ENCODE measurements at regions of chr3 and their contacts with region 1.

Region 1: DNA sequence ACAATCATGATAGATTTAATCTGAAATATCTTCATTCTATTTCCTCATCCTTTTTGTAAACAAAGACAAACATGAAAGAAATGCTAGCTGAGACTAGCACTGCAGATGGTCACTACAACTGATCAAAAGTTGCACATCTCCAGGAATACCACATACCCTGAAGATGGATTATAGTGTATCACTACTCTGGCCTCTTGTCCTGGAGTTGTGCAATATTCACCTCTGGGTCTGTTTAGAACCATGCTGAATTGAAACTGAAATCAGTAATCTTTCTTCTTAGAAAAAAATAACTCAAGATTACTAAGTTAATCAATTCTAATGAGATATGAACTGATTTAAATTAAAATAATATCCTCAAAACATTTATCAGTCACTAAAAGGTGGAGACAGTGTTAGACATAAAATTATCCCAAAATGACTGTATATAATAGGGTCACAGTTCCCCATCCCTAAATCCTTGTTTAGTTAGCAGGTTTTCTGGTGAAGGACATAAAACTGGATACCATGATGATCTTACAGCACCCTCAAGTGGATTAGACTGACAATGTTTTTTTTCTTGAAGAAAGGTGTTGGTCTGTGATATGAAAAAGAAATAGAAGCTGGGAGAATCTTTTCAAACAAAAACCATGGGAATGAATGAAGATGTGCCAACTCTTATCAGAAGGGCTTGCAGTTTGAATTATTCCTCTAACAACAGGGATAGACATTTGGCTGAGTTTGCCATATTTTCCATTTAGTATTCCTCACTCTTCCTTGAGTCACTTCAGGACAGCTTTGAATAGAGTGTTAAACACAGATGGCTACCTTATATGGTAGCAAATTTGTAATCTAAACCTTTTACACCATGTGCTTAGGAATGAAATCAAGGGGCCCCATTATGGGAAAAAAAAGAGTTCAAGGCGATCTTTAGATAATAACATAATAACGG is 7.1 kb upstream of the TTC14 start:
- DNase-seq: peak in 1 of 14 experiments; percentile 5
- ATAC-seq: no peak
- H3K4me3 ChIP-seq: no peak overlapping the region
- H3K4me3 Mint-ChIP-seq: no peak overlapping the region
- H3K27ac ChIP-seq: no peak overlapping the region
- H3K27ac Mint-ChIP-seq: no peak overlapping the region
- H3K4me1 ChIP-seq: no peaks in the 10 kb centered on the region
- H3K4me1 Mint-ChIP-seq: no peaks in the 10 kb centered on the region
- H3K27me3 ChIP-seq: peaks cover 8 to 27% of the 10 kb centered on the region in 2 experiments
- H3K27me3 Mint-ChIP-seq: peaks cover 60% of the 10 kb centered on the region
- CTCF ChIP-seq: no peak

Region 2: DNA sequence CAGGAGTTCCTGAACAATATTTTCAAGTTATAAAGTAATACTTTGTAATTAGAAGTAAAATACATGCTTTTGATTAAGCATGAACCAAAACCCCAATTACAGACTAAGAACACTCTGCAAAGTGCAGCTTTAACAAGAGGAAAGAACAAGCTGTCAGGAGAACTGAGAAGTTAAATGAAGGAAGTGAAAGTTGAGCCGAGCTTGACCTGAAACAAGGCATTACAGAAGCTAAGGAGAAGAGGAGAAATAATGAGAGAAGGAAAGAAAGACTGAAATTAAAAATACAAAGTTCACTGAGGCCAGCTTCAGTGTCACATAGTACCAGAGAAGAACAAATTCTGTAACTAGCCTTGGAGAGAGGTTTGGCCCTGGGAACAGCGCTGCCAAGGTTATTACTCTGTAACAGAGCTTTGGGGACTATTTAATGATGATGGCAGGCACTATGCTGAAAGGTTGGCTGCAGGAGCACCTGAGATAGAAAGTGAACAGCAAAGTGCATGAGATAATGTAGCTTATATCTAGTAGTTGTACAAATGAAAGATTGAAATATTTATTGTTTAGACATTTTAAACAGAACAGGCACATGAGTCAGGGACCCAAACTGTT is 316.2 kb before region 1 on chr3:
- CTCF ChIA-PET with region 1: no interaction called
- POLR2A ChIA-PET with region 1: no interaction called
- intact Hi-C with region 1: no loop called
- DNase-seq: no peak
- ATAC-seq: no peak
- H3K4me3 ChIP-seq: no peak overlapping the region
- H3K4me3 Mint-ChIP-seq: no peak overlapping the region
- H3K27ac ChIP-seq: no peak overlapping the region
- H3K27ac Mint-ChIP-seq: no peak overlapping the region
- H3K4me1 ChIP-seq: no peaks in the 10 kb centered on the region
- H3K4me1 Mint-ChIP-seq: no peaks in the 10 kb centered on the region
- H3K27me3 ChIP-seq: no peaks in the 10 kb centered on the region
- H3K27me3 Mint-ChIP-seq: no peaks in the 10 kb centered on the region
- CTCF ChIP-seq: no peak

Region 3: DNA sequence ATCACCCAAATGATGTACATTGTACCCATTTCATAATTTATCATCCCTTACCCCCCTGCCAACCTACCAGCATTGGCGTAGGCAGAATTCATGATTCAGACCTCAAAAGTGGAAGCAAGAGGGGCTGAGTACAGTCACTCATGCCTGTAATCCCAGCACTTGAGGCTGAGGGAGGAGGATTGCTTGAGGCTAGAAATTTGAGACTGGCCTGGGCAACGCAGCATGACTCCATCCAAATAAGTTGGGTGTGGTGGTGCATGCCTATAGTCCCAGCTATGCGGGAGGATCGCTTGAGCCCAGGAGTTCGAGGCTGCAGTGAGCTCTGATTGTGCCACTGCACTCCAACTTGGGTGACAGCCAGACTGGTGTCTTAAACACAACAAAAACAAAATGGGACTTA is 17.5 kb after region 1 on chr3:
- CTCF ChIA-PET with region 1: no interaction called
- POLR2A ChIA-PET with region 1: no interaction called
- intact Hi-C with region 1: no loop called
- DNase-seq: no peak
- ATAC-seq: no peak
- H3K4me3 ChIP-seq: no peak overlapping the region
- H3K4me3 Mint-ChIP-seq: no peak overlapping the region
- H3K27ac ChIP-seq: no peak overlapping the region
- H3K27ac Mint-ChIP-seq: no peak overlapping the region
- H3K4me1 ChIP-seq: no peaks in the 10 kb centered on the region
- H3K4me1 Mint-ChIP-seq: peaks cover 10% of the 10 kb centered on the region
- H3K27me3 ChIP-seq: no peaks in the 10 kb centered on the region
- H3K27me3 Mint-ChIP-seq: no peaks in the 10 kb centered on the region
- CTCF ChIP-seq: no peak

Region 4: DNA sequence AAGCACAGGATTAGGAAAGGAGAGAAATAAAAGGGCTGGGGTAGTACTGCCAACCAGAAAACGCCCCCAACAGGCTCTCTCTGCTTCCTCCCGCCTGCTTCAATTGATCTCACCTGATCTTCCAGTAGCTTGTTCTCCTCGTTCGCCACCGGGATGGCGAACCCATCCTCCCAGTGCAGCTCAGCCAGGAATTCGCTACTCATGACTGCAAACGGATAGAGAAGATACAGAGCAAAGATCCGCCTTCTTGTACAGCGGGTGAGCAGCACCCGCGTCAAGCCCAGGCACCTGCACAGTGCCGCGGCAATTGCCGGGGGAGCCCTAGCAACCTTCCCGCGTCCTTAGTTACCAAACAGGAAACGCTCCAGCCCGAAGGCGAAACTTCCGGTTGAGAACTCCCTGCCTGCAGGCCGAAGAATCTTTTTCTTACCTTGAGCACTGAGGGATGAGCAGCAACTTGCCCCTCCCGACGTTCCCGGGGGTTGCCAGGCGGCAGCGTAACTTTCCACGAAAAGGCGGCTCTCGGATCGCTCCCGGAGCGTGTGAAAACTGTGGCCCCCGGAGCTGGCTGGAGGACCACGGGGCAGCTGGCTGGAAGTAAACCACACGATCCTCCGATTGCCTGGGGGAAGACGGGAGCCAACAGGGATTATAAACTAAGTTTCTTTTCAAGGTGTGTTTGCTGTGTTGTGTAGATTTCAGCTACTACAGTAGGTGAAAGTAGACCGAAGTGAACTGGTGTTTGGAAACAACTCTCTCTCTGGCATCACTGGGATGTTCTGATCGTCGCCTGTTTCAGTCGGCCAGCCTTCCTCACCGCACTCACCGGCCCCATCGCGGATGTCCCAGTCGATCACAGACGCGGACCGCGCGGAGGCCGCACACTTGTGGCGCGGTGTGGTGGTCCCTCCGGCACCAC is 84.5 kb after region 1 on chr3 and contains the start of gene CCDC39:
- CTCF ChIA-PET with region 1: no interaction called
- POLR2A ChIA-PET with region 1: no interaction called
- intact Hi-C with region 1: loop called in 1 of 2 experiments (anchors 5 kb)
- DNase-seq: peak; percentile 17 to 74 (median 52)
- ATAC-seq: peak; percentile 82
- H3K4me3 ChIP-seq: peak within 1 kb of the TSS; percentile 59
- H3K4me3 Mint-ChIP-seq: peak within 1 kb of the TSS; percentile 91
- H3K27ac ChIP-seq: no peak within 1 kb of the TSS
- H3K27ac Mint-ChIP-seq: peak within 1 kb of the TSS; percentile 6
- H3K4me1 ChIP-seq: peaks cover 19% of the 10 kb centered on the region
- H3K4me1 Mint-ChIP-seq: peaks cover 24% of the 10 kb centered on the region
- H3K27me3 ChIP-seq: peaks cover 22 to 39% of the 10 kb centered on the region in 2 experiments
- H3K27me3 Mint-ChIP-seq: peaks cover 68% of the 10 kb centered on the region
- CTCF ChIP-seq: no peak
- total RNA-seq, gene CCDC39: not detected

Region 5: GRCh38 chr3:181210275-181210674 is 615.4 kb after region 1 on chr3:
- CTCF ChIA-PET with region 1: no interaction called
- POLR2A ChIA-PET with region 1: no interaction called
- intact Hi-C with region 1: no loop called
- DNase-seq: no peak
- ATAC-seq: no peak
- H3K4me3 ChIP-seq: no peak overlapping the region
- H3K4me3 Mint-ChIP-seq: no peak overlapping the region
- H3K27ac ChIP-seq: no peak overlapping the region
- H3K27ac Mint-ChIP-seq: no peak overlapping the region
- H3K4me1 ChIP-seq: no peaks in the 10 kb centered on the region
- H3K4me1 Mint-ChIP-seq: no peaks in the 10 kb centered on the region
- H3K27me3 ChIP-seq: peaks cover 0 to 5% of the 10 kb centered on the region in 2 experiments
- H3K27me3 Mint-ChIP-seq: no peaks in the 10 kb centered on the region
- CTCF ChIP-seq: no peak